CD8-positive, alpha-beta memory T cell (primary cell): ENCODE measurements at regions of chr12 and their contacts with region 1.

Region 1: DNA sequence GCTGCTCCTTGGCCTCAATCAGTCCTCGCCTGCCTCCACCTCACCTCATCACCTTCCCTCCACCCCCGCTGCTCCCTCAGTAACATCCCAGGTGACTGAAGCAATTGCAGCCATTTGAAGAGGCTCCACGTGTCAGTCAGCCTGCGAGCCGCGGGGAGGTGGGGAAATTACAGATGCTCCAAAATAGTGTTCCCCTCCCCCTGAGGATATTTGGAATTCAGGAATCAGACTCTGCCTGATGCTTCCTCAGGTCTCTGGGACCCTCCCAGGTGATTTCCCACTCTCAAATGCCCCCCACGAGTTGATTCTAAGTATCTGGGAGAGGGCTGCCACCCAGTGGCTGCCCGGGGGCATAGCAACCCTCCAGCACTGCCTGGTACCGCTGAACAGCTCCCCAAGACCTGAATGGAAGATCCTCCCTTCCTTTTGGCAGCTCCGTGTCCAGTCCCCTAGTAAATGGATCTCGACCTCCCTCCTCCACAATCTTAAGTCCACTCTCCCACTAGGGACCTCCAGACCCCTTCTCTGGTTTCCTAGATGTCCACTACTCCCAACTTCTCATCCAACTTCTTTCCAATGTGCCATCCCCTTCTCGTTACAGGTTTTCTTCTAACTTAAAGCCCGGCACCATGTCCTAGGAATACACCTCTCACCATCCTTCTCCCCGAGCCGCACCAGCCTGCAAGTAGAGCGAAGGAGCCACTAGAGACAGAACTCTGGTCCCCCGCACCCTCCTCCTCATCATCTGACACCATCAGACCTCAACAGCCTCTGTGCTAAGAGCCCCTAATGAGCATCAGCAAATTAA is 1.4 kb upstream of the ASIC1 start:
- DNase-seq: peak; percentile 34 to 68 (median 38)
- H3K4me3 ChIP-seq: peak overlapping the region; percentile 44
- H3K4me3 Mint-ChIP-seq: peak overlapping the region; percentile 55 to 91 (median 74)
- H3K27ac ChIP-seq: no peak overlapping the region
- H3K27ac Mint-ChIP-seq: peak overlapping the region in 1 of 8 donors; percentile 90
- H3K4me1 ChIP-seq: peaks cover 33% of the 10 kb centered on the region
- H3K4me1 Mint-ChIP-seq: peaks cover 27 to 48% (median 32%) of the 10 kb centered on the region in 3 donors
- H3K27me3 ChIP-seq: peaks cover 19% of the 10 kb centered on the region
- H3K27me3 Mint-ChIP-seq: peaks cover 51 to 55% of the 10 kb centered on the region in 2 donors

Region 2: GRCh38 chr12:50025187-50026059 is 30.6 kb before region 1 on chr12 and contains the start of gene RACGAP1:
- CTCF ChIA-PET with region 1: interaction called, 10 read pairs
- POLR2A ChIA-PET with region 1: no interaction called
- DNase-seq: peak; percentile 90 to 98 (median 97)
- H3K4me3 ChIP-seq: peak within 1 kb of the TSS; percentile 69
- H3K4me3 Mint-ChIP-seq: peak within 1 kb of the TSS; percentile 92 to 100 (median 98)
- H3K27ac ChIP-seq: peak within 1 kb of the TSS; percentile 65
- H3K27ac Mint-ChIP-seq: peak within 1 kb of the TSS; percentile 48 to 99 (median 96)
- H3K4me1 ChIP-seq: peaks cover 13% of the 10 kb centered on the region
- H3K4me1 Mint-ChIP-seq: peaks cover 14 to 46% (median 19%) of the 10 kb centered on the region in 3 donors
- H3K27me3 ChIP-seq: no peaks in the 10 kb centered on the region
- H3K27me3 Mint-ChIP-seq: peaks cover 0 to 5% of the 10 kb centered on the region in 2 donors
- total RNA-seq, gene RACGAP1: 79.3 to 84.3 TPM

Region 3: GRCh38 chr12:50038336-50038735 is 17.7 kb before region 1 on chr12:
- CTCF ChIA-PET with region 1: interaction called, 21 read pairs
- POLR2A ChIA-PET with region 1: interaction called, 3 read pairs
- DNase-seq: no peak
- H3K4me3 ChIP-seq: no peak overlapping the region
- H3K4me3 Mint-ChIP-seq: no peak overlapping the region
- H3K27ac ChIP-seq: no peak overlapping the region
- H3K27ac Mint-ChIP-seq: peak overlapping the region in 1 of 8 donors; percentile 48
- H3K4me1 ChIP-seq: no peaks in the 10 kb centered on the region
- H3K4me1 Mint-ChIP-seq: no peaks in the 10 kb centered on the region
- H3K27me3 ChIP-seq: no peaks in the 10 kb centered on the region
- H3K27me3 Mint-ChIP-seq: peaks cover 7 to 13% of the 10 kb centered on the region in 2 donors

Region 4: DNA sequence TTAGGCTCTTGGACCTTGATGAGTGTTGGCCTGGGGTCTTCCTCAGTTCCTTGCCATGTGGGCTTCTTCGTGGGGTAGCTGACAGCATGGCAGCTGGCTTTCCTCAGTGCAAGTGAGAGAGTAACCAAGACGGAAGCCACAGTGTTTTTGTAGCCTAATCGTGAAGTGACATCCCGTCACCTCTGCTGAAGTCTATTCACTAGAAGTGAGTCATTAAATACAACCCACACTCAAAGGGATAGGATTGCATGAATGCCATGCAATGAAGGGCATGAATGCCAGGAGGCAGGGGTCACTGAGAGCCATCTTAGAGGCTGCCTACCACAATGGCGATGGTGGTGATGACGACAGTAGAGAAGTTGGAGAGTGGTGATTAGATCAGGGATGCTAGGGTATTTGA is 12.2 kb before region 1 on chr12:
- CTCF ChIA-PET with region 1: interaction called, 21 read pairs
- POLR2A ChIA-PET with region 1: interaction called, 3 read pairs
- DNase-seq: no peak
- H3K4me3 ChIP-seq: no peak overlapping the region
- H3K4me3 Mint-ChIP-seq: no peak overlapping the region
- H3K27ac ChIP-seq: no peak overlapping the region
- H3K27ac Mint-ChIP-seq: no peak overlapping the region
- H3K4me1 ChIP-seq: no peaks in the 10 kb centered on the region
- H3K4me1 Mint-ChIP-seq: no peaks in the 10 kb centered on the region
- H3K27me3 ChIP-seq: no peaks in the 10 kb centered on the region
- H3K27me3 Mint-ChIP-seq: peaks cover 5% of the 10 kb centered on the region in 2 donors

Region 5: GRCh38 chr12:50074936-50075807 is 19.1 kb after region 1 on chr12:
- CTCF ChIA-PET with region 1: interaction called, 47 read pairs
- POLR2A ChIA-PET with region 1: no interaction called
- DNase-seq: peak; percentile 60 to 85 (median 71)
- H3K4me3 ChIP-seq: no peak overlapping the region
- H3K4me3 Mint-ChIP-seq: no peak overlapping the region
- H3K27ac ChIP-seq: no peak overlapping the region
- H3K27ac Mint-ChIP-seq: peak overlapping the region in 3 of 8 donors; percentile 11 to 74 (median 39)
- H3K4me1 ChIP-seq: peaks cover 4% of the 10 kb centered on the region
- H3K4me1 Mint-ChIP-seq: peaks cover 5 to 9% (median 5%) of the 10 kb centered on the region in 3 donors
- H3K27me3 ChIP-seq: no peaks in the 10 kb centered on the region
- H3K27me3 Mint-ChIP-seq: peaks cover 3 to 8% of the 10 kb centered on the region in 2 donors

Region 6: DNA sequence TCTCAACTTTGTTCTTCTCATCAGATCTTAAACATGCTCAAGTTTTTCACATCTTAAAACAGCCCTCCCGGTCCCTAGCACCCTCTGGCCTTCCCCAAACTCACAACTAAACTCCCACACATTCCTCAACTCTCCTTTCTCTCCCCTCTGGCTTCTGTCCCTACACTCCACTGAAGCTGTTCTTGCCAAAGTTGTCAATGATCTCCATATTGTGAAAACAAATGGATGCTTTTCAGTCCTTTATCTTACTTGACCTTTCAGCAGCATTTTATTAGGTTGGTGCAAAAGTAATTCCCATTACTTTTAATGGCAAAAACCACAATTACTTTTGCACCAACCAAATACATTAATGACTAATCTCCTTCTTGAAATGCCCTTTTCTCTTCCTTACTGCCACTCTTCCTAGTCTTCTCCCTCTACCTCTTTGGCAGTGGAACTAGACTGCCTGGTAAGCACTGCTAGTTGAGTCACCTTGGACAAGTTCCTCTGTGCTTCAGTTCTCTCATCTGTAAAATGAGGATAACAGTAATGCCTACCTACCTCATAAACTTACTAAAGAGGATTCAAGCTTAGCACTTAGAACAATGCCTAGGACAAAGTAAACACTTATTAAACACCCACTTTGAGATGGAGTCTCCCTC is 95.1 kb after region 1 on chr12:
- CTCF ChIA-PET with region 1: no interaction called
- POLR2A ChIA-PET with region 1: no interaction called
- DNase-seq: no peak
- H3K4me3 ChIP-seq: no peak overlapping the region
- H3K4me3 Mint-ChIP-seq: no peak overlapping the region
- H3K27ac ChIP-seq: no peak overlapping the region
- H3K27ac Mint-ChIP-seq: peak overlapping the region in 5 of 8 donors; percentile 20 to 88 (median 48)
- H3K4me1 ChIP-seq: no peaks in the 10 kb centered on the region
- H3K4me1 Mint-ChIP-seq: peaks cover 16 to 31% (median 21%) of the 10 kb centered on the region in 3 donors
- H3K27me3 ChIP-seq: no peaks in the 10 kb centered on the region
- H3K27me3 Mint-ChIP-seq: no peaks in the 10 kb centered on the region